Caco-2 (cell line): ENCODE measurements at regions of chr2 and their contacts with region 1.

Region 1: DNA sequence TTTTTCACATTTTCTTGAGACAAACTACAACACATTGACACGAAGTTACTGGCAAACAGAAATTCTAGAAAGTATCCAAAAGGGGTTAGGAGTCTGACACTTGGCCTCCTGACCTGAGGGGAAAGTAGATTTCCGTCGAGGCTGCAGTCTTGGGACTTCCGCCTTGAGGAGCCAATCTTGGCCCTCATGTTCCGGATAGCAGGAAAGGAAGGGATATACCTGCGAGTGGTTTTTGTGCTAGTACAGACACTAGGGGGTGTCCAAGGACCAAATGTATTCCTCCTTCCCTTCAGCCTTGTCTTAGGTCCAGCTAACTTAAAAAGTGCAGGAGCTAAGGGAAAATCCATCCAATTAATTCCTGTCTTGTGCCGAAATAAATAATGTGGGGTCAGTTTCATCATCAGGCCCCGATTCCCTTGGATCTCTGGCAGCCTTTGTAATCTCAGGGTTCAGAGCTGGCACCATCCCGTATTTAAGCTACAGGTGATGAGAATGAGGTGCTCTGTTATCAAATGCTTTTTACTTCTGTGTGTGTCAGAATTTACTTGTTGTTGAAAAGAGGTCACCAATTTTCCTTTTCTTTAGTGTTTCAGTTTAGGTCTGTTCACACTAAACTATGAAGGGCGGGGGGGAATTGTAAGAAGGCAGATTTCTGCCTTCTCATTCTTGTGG is 330.2 kb upstream of the FANCL start:
- DNase-seq: peak; percentile 63 to 70
- H3K4me3 ChIP-seq: no peak overlapping the region
- H3K4me3 Mint-ChIP-seq: no peak overlapping the region
- H3K27ac Mint-ChIP-seq: no peak overlapping the region
- H3K4me1 ChIP-seq: peaks cover 9% of the 10 kb centered on the region; the same call in 1 of the 2 replicates
- H3K4me1 Mint-ChIP-seq: no peaks in the 10 kb centered on the region
- H3K27me3 ChIP-seq: no peaks in the 10 kb centered on the region
- H3K27me3 Mint-ChIP-seq: peaks cover 6% of the 10 kb centered on the region
- CTCF ChIP-seq: peak; percentile 56 to 76

Region 2: DNA sequence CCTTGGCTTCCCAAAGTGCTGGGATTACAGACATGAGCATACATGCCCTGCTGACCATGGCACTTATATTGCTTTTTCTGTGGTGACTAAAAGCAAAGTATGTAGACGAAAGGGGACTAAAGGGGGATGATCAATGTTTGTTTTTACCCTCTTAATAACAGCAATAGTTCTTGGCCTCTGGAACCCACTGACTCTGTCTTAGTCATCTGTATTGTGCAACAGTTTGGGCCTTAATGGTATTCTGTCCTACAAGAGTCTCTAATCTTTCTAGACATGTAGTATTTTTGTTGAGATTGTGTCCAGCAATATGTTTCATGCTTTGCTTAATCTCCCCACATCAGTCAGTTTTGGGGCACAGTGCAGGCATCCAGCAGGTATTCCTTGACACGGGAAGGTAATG is 29.7 kb after region 1 on chr2:
- CTCF ChIA-PET with region 1: no interaction called
- POLR2A ChIA-PET with region 1: no interaction called
- intact Hi-C with region 1: no loop called
- DNase-seq: no peak
- H3K4me3 ChIP-seq: no peak overlapping the region
- H3K4me3 Mint-ChIP-seq: no peak overlapping the region
- H3K27ac Mint-ChIP-seq: no peak overlapping the region
- H3K4me1 ChIP-seq: no peaks in the 10 kb centered on the region
- H3K4me1 Mint-ChIP-seq: no peaks in the 10 kb centered on the region
- H3K27me3 ChIP-seq: no peaks in the 10 kb centered on the region
- H3K27me3 Mint-ChIP-seq: peaks cover 5% of the 10 kb centered on the region
- CTCF ChIP-seq: no peak

Region 3: DNA sequence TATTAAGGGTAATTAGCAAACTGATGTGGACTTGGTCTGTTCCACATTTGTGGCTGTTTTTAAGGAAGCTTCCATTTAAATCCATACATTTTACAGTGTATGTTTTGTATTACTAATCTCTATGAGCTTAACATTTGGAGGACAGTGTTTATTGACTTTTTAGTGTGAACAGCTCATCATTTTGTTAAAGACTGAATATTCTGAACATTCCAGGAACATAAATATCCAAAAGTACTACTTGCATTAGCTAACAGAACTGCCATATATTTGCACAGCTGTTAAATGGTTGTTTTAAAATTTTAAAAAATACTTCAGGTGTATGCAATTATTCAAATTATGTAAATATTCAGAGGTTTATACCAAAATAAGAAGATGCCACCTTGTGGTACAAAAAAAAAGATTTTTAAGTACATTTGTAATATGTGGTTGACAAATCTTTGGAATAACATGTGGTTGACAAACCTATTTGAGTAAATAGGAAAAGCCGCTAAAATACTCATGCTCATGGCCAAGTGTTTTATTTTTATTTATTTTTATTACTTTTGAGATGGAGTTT is 109.5 kb after region 1 on chr2:
- CTCF ChIA-PET with region 1: interaction called, 22 read pairs
- POLR2A ChIA-PET with region 1: no interaction called
- intact Hi-C with region 1: loop called (anchors 1 kb)
- DNase-seq: no peak
- H3K4me3 ChIP-seq: no peak overlapping the region
- H3K4me3 Mint-ChIP-seq: no peak overlapping the region
- H3K27ac Mint-ChIP-seq: no peak overlapping the region
- H3K4me1 ChIP-seq: no peaks in the 10 kb centered on the region
- H3K4me1 Mint-ChIP-seq: no peaks in the 10 kb centered on the region
- H3K27me3 ChIP-seq: no peaks in the 10 kb centered on the region
- H3K27me3 Mint-ChIP-seq: no peaks in the 10 kb centered on the region
- CTCF ChIP-seq: peak in 1 of 2 experiments; percentile 36

Region 4: GRCh38 chr2:58727981-58728656 is 156.8 kb after region 1 on chr2:
- CTCF ChIA-PET with region 1: no interaction called
- POLR2A ChIA-PET with region 1: no interaction called
- intact Hi-C with region 1: loop called (anchors 1 kb)
- DNase-seq: no peak
- H3K4me3 ChIP-seq: no peak overlapping the region
- H3K4me3 Mint-ChIP-seq: no peak overlapping the region
- H3K27ac Mint-ChIP-seq: no peak overlapping the region
- H3K4me1 ChIP-seq: no peaks in the 10 kb centered on the region
- H3K4me1 Mint-ChIP-seq: peaks cover 6% of the 10 kb centered on the region
- H3K27me3 ChIP-seq: no peaks in the 10 kb centered on the region
- H3K27me3 Mint-ChIP-seq: peaks cover 10% of the 10 kb centered on the region
- CTCF ChIP-seq: no peak